Sciatic nerve (tissue), 2 donors: ENCODE measurements at regions of chr2 and their contacts with region 1.

Region 1: DNA sequence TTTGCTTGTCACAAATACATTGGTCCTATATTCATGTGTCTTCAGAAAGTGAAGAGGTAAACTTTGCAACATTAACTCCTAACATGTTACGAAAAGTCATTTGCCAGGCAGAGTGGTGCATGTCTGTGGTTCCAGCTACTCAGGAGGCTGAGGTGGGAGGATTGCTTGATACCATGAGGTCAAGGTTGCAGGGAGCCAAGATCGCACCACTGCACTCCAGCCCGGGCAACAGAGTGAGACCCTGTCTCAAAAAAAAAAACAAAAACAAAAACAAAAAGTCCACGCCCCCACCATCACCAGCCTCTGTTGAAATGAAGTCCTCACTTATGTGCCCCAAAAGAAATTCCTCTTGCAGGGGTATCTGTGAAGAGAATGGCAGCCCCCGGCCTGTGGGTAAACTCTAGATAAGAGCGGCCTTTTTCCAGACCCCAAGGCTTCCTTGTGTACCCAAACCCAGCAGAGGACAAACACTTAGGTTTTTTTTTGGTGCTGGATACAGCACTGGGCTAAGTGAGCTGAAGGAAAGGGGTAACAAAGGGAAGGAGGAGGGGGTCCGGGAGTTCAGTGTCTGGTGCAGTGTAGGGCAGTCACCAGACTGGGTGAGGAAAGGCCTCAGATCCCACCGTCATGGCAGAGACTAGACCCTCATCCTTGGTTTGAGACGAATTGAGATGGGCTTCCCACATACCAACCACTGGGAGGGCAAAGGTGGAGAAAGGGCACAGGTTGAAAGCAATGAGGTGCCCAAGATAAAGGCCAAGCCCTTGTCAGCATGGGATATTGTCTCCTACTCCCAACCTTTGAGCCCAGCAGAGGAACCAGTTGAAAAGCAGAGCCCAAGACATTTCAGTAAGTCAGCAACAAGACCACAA is 19.2 kb downstream of the HSPD1 start:
- DNase-seq: no peak
- ATAC-seq: no peak

Region 2: GRCh38 chr2:197399887-197400540 is 80.4 kb before region 1 on chr2:
- intact Hi-C with region 1: loop called (anchors 2 kb)
- DNase-seq: no peak
- ATAC-seq: no peak

Region 3: GRCh38 chr2:197728338-197729207 is 248.2 kb after region 1 on chr2:
- intact Hi-C with region 1: no loop called
- DNase-seq: no peak
- ATAC-seq: no peak